Activated naive CD4-positive, alpha-beta T cell treated with anti-CD3 and anti-CD28 coated beads, Interleukin-2, amount 10 ng/mL, durations not matched to agents 7 days and 5 days (primary cell): ENCODE measurements at regions of chr10 and their contacts with region 1.

Region 1: GRCh38 chr10:103910442-103911000 is 7.5 kb downstream of the STN1 start:
- DNase-seq: no peak
- H3K4me3 Mint-ChIP-seq: peak overlapping the region; percentile 67
- H3K27ac Mint-ChIP-seq: peak overlapping the region; percentile 100
- H3K4me1 Mint-ChIP-seq: peaks cover 79% of the 10 kb centered on the region
- H3K27me3 Mint-ChIP-seq: no peaks in the 10 kb centered on the region

Region 2: DNA sequence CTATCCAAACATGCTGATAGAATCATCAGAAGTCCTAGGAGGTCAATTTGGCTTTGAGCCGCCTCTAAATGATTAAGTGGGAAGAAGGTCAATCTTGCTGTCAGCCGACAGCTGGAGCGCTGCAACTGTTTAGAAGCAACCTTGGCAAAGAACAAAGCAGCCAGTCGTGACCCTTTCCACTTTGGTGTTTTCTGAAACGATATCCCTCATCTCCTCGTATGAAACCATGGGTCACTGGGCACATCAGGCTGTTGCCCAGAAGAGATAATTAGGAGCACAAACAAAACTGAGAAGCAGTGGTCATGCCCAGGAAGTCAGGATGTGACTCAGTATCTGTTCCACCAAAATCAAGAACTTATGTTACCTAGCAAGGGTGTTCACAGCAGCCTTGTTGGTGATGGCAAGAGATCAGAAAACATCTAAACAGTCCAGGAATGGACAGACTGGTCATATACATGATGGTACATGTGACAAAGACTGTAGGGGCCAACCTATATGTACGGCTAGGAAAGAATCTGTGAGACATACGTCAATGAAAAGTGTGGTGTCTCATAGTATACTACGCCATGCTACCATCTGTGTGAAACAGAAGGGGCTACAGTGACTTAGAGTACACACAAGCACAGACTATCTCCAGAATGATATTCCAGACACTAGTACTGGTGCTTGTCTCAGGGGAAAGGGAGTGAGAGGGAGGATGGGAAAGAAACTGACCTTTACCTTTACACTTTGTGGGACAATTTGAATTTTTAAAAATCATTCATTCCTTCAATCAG is 14.9 kb before region 1 on chr10:
- CTCF ChIA-PET with region 1: interaction called, 13 read pairs
- DNase-seq: no peak
- H3K4me3 Mint-ChIP-seq: no peak overlapping the region
- H3K27ac Mint-ChIP-seq: peak overlapping the region; percentile 84
- H3K4me1 Mint-ChIP-seq: peaks cover 48% of the 10 kb centered on the region
- H3K27me3 Mint-ChIP-seq: no peaks in the 10 kb centered on the region

Region 3: DNA sequence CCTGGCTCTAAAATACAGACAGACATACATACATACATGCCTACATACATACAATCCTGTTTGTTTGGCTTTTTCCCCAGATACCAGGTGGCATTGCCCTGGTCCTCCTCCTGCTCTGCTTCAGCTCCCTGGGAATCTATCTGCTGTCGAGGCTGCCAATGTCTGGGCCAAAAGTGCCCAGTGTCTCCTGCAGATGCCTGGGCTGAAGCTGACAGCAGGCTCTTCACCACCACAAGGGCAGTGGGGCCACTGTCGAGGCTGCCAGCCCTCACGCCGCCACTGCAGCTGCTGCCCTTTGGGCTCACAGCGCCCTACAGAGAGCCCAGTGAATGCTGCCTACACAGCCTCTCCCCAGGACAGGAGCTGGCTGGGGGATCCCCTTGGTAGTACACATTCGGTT is 25.5 kb after region 1 on chr10:
- CTCF ChIA-PET with region 1: no interaction called
- DNase-seq: no peak
- H3K4me3 Mint-ChIP-seq: no peak overlapping the region
- H3K27ac Mint-ChIP-seq: no peak overlapping the region
- H3K4me1 Mint-ChIP-seq: no peaks in the 10 kb centered on the region
- H3K27me3 Mint-ChIP-seq: peaks cover 21% of the 10 kb centered on the region

Region 4: DNA sequence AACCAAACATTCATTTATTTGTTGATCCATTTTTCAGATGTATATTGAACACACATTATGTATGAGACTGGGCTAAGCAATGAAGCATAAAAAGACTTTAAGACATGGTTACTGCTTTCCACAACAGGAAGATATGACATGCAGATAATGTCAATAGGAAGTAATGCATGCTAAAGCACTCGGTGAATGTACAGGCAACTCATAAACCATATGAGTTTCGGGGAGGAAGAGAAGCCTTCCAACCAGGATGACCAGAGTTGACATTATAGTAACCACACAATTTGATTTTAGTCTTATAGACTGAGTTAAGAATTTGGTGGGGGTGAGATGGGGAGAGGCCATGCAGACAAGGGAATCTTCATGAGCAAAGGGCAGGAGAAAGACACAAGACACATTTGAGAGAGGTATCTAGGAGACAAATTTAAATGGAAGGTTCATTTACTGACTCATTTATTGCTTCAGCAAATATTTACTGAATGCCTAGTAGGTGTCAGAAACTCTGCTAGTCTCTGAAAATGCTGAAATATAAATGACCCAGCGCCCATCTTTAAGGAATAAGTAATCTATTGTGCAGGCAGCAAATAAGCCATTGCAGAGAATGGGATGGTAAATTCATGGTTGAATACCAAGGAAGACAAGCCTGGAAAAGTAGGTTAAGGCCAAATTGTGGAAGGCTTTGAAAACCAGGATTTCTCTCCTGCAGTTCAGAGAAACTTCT is 37.4 kb after region 1 on chr10:
- CTCF ChIA-PET with region 1: no interaction called
- DNase-seq: no peak
- H3K4me3 Mint-ChIP-seq: no peak overlapping the region
- H3K27ac Mint-ChIP-seq: no peak overlapping the region
- H3K4me1 Mint-ChIP-seq: peaks cover 11% of the 10 kb centered on the region
- H3K27me3 Mint-ChIP-seq: peaks cover 7% of the 10 kb centered on the region

Region 5: GRCh38 chr10:104045151-104046089 is 134.9 kb after region 1 on chr10:
- CTCF ChIA-PET with region 1: no interaction called
- DNase-seq: no peak
- H3K4me3 Mint-ChIP-seq: no peak overlapping the region
- H3K27ac Mint-ChIP-seq: no peak overlapping the region
- H3K4me1 Mint-ChIP-seq: no peaks in the 10 kb centered on the region
- H3K27me3 Mint-ChIP-seq: peaks cover 59% of the 10 kb centered on the region